Activated CD4-positive, alpha-beta memory T cell treated with anti-CD3 and anti-CD28 coated beads for 36 hours (primary cell): ENCODE measurements at regions of chr5 and their contacts with region 1.

Region 1: DNA sequence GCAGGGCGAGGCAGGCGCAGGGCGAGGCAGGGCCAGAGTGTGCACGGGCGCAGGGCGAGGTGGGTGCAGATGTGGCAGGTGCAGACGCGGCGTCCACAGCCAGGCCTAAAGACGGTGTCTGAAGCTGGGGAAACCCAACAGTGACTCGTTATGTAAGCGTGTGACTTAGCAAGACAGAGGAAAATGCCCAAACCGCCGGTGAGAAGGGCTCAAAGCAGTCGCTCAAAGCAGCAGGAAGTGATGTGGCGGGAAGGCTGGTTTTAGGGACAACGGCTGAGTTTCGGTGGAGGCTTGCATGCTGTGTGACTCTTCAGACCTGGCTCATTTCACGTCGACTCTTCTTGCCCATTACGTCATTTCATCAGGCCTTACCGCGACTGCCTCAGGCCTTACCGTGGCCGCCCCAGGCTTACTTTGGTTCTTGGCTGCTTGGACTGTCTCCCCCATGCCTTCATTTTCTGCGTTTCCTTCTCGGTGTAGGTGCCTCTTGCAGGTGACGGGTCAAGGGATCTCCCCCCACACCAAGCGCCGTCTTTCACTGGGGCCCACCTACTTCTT is 50.5 kb upstream of the EXOC3 start:
- DNase-seq: peak; percentile 94
- H3K4me3 Mint-ChIP-seq: peak overlapping the region; percentile 71
- H3K27ac Mint-ChIP-seq: peak overlapping the region; percentile 93
- H3K4me1 Mint-ChIP-seq: peaks cover 25% of the 10 kb centered on the region
- H3K27me3 Mint-ChIP-seq: no peaks in the 10 kb centered on the region

Region 2: GRCh38 chr5:334903-335739 is 57.4 kb before region 1 on chr5:
- CTCF ChIA-PET with region 1: no interaction called
- POLR2A ChIA-PET with region 1: no interaction called
- intact Hi-C with region 1: loop called (anchors 1 kb)
- DNase-seq: no peak
- H3K4me3 Mint-ChIP-seq: peak overlapping the region; percentile 12
- H3K27ac Mint-ChIP-seq: peak overlapping the region; percentile 66
- H3K4me1 Mint-ChIP-seq: peaks cover 33% of the 10 kb centered on the region
- H3K27me3 Mint-ChIP-seq: peaks cover 7% of the 10 kb centered on the region

Region 3: DNA sequence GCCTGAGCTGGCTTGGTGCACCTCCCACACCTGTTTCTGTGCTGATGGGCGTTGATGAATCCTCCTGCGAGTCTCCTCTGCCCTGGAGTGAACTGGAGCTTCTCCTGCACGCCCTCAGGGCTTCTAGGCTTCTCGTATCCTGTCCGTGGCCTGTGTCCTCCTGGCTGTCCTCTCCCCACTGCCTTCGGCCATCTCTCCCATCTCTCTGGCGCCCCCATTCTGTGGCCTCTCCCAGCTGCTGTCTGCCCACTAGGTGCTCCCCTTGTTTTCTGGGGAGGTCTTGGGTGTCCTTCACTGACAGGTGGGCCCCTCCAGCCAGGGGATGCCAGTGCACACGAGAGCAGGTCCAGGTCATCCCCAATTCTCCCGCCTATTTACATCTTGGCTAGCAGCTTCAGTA is 42.2 kb before region 1 on chr5:
- CTCF ChIA-PET with region 1: no interaction called
- POLR2A ChIA-PET with region 1: no interaction called
- intact Hi-C with region 1: no loop called
- DNase-seq: no peak
- H3K4me3 Mint-ChIP-seq: no peak overlapping the region
- H3K27ac Mint-ChIP-seq: no peak overlapping the region
- H3K4me1 Mint-ChIP-seq: peaks cover 23% of the 10 kb centered on the region
- H3K27me3 Mint-ChIP-seq: peaks cover 30% of the 10 kb centered on the region